GM12878 (cell line): ENCODE measurements at regions of chr6 and their contacts with region 1.

Region 1: GRCh38 chr6:3118353-3119039 is at the start of gene BPHL:
- DNase-seq: peak; percentile 75
- ATAC-seq: peak; percentile 97
- H3K4me3 ChIP-seq: peak within 1 kb of the TSS; percentile 87
- H3K27ac ChIP-seq: peak within 1 kb of the TSS; percentile 86
- H3K4me1 ChIP-seq: peaks cover 6% of the 10 kb centered on the region; the same call in 1 of the 2 replicates
- H3K27me3 ChIP-seq: no peaks in the 10 kb centered on the region
- CTCF ChIP-seq: no peak
- EP300 ChIP-seq: no peak
- POLR2A ChIP-seq: peak; percentile 90
- RAD21 ChIP-seq: no peak
- polyA plus RNA-seq, gene BPHL: 8.0 to 12.9 TPM

Region 2: GRCh38 chr6:3068329-3069214 is 49.9 kb before region 1 on chr6 and contains the start of gene RIPK1:
- CTCF ChIA-PET with region 1: interaction called, 4 read pairs
- POLR2A ChIA-PET with region 1: no interaction called
- RAD21 ChIA-PET with region 1: interaction called, 3 read pairs
- SMC1A ChIA-PET with region 1: interaction called, 3 read pairs
- in situ Hi-C with region 1: no loop called
- intact Hi-C with region 1: loop called (anchors 2 kb)
- DNase-seq: peak; percentile 40
- ATAC-seq: peak; percentile 90
- H3K4me3 ChIP-seq: peak within 1 kb of the TSS; percentile 73
- H3K27ac ChIP-seq: peak within 1 kb of the TSS; percentile 91
- H3K4me1 ChIP-seq: no peaks in the 10 kb centered on the region; the same call in 1 of the 2 replicates
- H3K27me3 ChIP-seq: no peaks in the 10 kb centered on the region
- CTCF ChIP-seq: peak; percentile 23 to 62 (median 35); a peak in 5 of 6 replicates
- EP300 ChIP-seq: no peak
- POLR2A ChIP-seq: peak; percentile 84
- RAD21 ChIP-seq: 0 out of 2 replicates have a peak, but pooled peaks have one; percentile 15
- polyA plus RNA-seq, gene RIPK1: 1.6 to 2.2 TPM